MCF 10A (cell line): ENCODE measurements at regions of chr7 and their contacts with region 1.

Region 1: DNA sequence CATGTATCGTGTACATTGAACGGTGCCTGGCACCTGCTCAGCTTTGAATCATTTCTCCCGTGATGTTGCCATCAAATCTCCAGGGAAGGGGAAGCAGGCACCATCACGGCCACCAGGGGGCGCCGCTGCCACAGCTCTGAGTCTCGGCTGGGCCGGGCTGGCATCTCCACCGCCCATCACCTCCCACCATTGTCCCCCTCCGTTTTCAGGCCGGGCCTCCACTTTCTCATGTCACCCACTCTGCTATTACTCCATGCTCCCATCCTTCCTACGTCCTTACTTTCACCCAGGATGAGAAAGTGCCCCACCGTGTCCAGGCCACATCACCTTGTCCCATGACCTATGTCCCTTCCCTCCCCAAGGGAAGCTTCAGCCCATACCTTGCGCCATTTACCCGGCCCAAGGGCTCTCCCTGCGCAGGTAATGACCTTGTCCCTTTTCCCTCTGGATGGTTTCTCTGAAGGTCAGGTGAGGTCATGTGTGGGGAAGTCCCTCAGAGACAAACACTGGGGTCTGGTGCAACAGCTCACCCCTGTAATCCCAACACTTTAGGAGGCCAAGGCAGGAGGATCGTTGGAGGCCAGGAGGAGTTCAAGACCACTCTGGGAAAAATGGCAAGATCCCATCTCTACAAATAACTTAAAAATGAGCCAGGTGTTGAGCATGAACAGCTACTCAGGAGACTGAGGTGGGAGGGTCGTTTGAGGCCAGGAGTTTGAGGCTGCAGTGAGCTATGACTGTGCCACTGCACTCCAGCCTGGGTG is 31.8 kb upstream of the OCM2 start:
- DNase-seq: peak; percentile 79
- H3K4me3 Mint-ChIP-seq: no peak overlapping the region
- H3K27ac Mint-ChIP-seq: no peak overlapping the region
- H3K4me1 Mint-ChIP-seq: no peaks in the 10 kb centered on the region
- H3K27me3 Mint-ChIP-seq: no peaks in the 10 kb centered on the region
- CTCF ChIP-seq: peak; percentile 93

Region 2: DNA sequence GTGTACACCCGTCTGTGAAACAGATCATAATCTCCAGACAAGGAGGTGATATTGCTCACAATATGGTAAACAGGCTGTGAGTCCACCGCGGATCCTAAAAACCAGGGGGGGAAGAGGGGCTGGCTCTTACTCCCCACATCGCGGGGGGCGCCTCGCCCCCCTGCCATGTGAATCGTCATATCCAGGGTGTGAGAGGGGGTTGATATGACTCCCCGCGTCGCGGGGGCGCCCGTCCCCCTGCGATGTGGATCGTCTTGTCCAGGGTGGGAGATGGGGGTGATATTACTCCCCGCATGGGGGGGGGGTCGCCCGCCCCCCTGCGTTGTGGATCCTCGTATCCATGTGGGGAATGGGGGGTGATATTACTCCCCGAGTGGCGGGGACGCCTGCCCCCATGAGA is 62.7 kb before region 1 on chr7:
- CTCF ChIA-PET with region 1: no interaction called
- POLR2A ChIA-PET with region 1: no interaction called
- intact Hi-C with region 1: no loop called
- DNase-seq: no peak
- H3K4me3 Mint-ChIP-seq: no peak overlapping the region
- H3K27ac Mint-ChIP-seq: no peak overlapping the region
- H3K4me1 Mint-ChIP-seq: peaks cover 5% of the 10 kb centered on the region
- H3K27me3 Mint-ChIP-seq: no peaks in the 10 kb centered on the region
- CTCF ChIP-seq: no peak

Region 3: GRCh38 chr7:98034081-98035035 is 12.6 kb after region 1 on chr7:
- CTCF ChIA-PET with region 1: interaction called, 20 read pairs
- POLR2A ChIA-PET with region 1: no interaction called
- intact Hi-C with region 1: no loop called
- DNase-seq: peak; percentile 38
- H3K4me3 Mint-ChIP-seq: no peak overlapping the region
- H3K27ac Mint-ChIP-seq: no peak overlapping the region
- H3K4me1 Mint-ChIP-seq: peaks cover 6% of the 10 kb centered on the region
- H3K27me3 Mint-ChIP-seq: no peaks in the 10 kb centered on the region
- CTCF ChIP-seq: no peak

Region 4: DNA sequence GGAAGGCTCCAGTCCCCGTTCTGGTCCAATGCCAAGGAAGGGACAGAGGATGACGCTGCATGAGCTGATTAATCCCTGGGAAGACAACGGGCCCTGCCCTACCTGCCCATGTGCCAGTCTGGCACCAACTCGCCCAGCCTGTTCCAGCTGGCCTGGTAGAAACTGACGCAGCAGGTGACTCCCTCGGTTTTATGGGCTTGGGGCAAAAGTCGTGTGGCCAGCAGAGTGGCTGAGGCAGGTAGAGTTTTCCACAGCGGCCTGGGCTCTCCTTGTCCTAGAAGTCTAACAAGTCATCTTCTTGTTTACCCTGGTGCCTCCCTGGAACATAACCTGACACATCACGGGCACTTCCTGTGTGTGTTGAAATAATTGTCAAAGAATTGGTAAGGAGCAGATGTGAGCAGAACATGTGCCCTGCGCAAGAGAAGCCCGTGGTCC is 64.5 kb after region 1 on chr7:
- CTCF ChIA-PET with region 1: interaction called, 14 read pairs
- POLR2A ChIA-PET with region 1: interaction called, 4 read pairs
- intact Hi-C with region 1: no loop called
- DNase-seq: peak; percentile 79
- H3K4me3 Mint-ChIP-seq: no peak overlapping the region
- H3K27ac Mint-ChIP-seq: peak overlapping the region; percentile 91
- H3K4me1 Mint-ChIP-seq: peaks cover 8% of the 10 kb centered on the region
- H3K27me3 Mint-ChIP-seq: no peaks in the 10 kb centered on the region
- CTCF ChIP-seq: no peak

Region 5: GRCh38 chr7:98119256-98119918 is 97.6 kb after region 1 on chr7:
- CTCF ChIA-PET with region 1: interaction called, 49 read pairs
- POLR2A ChIA-PET with region 1: no interaction called
- intact Hi-C with region 1: no loop called
- DNase-seq: peak; percentile 59
- H3K4me3 Mint-ChIP-seq: peak overlapping the region; percentile 50
- H3K27ac Mint-ChIP-seq: peak overlapping the region; percentile 87
- H3K4me1 Mint-ChIP-seq: peaks cover 42% of the 10 kb centered on the region
- H3K27me3 Mint-ChIP-seq: no peaks in the 10 kb centered on the region
- CTCF ChIP-seq: no peak

Region 6: GRCh38 chr7:98149116-98149692 is 127.4 kb after region 1 on chr7:
- CTCF ChIA-PET with region 1: interaction called, 12 read pairs
- POLR2A ChIA-PET with region 1: interaction called, 4 read pairs
- intact Hi-C with region 1: no loop called
- DNase-seq: no peak
- H3K4me3 Mint-ChIP-seq: no peak overlapping the region
- H3K27ac Mint-ChIP-seq: no peak overlapping the region
- H3K4me1 Mint-ChIP-seq: no peaks in the 10 kb centered on the region
- H3K27me3 Mint-ChIP-seq: no peaks in the 10 kb centered on the region
- CTCF ChIP-seq: no peak

Region 7: DNA sequence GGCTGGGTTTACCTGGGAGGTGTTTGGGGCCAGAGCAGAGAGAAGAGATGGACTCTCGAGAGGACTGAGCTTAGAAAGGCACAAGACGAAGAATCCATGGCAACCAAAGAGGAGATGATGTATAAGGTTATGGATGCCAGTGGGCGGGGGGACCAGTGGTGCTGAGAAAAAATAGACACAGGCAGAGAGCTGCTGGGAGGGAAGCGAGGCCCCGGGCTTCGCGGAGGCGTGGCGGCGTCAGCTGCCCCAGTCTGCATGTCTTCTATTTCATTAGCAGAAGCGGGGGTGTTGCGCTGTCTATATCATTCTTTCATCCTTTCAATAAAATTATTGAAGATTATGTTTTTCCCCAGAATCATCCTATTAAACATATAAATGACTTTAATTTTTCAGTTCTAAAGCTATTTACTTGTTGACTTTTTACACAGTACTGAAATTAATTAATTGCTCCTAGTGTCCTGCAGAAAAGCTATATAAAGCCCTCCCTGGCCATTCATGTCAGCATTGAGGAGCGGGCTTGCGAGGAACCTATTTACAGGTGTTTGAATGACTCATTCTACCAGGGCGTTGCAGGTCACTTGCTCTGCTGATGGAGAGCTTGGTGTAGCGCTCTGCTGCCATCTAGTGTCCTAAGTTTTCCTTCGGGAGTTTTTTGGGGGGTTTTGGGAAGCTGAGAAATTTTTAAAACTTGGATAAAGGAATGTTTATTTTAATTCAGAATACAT is 146.6 kb after region 1 on chr7:
- CTCF ChIA-PET with region 1: interaction called, 739 read pairs
- POLR2A ChIA-PET with region 1: interaction called, 36 read pairs
- intact Hi-C with region 1: loop called (anchors 1 kb)
- DNase-seq: peak; percentile 82
- H3K4me3 Mint-ChIP-seq: no peak overlapping the region
- H3K27ac Mint-ChIP-seq: no peak overlapping the region
- H3K4me1 Mint-ChIP-seq: peaks cover 9% of the 10 kb centered on the region
- H3K27me3 Mint-ChIP-seq: no peaks in the 10 kb centered on the region
- CTCF ChIP-seq: peak; percentile 86

Region 8: DNA sequence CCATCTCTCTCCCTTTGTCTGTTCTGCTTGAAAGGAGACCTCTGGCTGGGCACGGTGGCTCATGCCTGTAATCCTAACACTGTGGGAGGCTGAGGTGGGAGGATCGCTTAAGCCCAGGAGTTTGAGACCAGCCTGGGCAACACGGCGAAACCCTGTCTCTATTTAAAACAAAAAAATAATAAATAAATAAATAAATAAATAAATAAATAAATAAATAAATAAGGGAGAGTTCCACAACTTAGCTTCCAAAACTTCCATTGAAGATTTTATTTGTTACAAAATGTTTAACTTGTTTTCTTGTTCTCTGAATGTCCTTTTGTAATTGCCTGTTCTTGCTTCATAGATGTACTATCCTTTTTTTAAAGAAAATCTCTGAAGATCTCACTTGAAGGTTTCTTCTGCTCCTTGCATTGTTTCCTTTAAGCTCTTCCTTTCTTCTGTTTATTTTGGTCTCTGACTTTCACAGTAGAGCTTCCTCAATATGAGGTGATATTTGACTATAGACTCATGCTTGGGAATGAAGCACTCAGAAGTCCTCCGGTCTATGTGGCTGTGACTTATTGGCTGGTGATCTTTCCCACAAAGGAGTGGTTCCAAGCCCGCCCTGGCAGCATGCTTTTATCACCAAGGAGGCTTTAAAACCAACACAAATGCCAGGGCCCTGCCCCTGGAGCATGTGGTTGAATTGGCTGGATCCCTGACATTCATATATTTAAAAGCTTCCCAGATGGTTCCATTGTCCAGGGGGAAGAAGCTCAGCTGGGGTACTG is 577.3 kb after region 1 on chr7:
- CTCF ChIA-PET with region 1: no interaction called
- POLR2A ChIA-PET with region 1: no interaction called
- intact Hi-C with region 1: no loop called
- DNase-seq: no peak
- H3K4me3 Mint-ChIP-seq: no peak overlapping the region
- H3K27ac Mint-ChIP-seq: no peak overlapping the region
- H3K4me1 Mint-ChIP-seq: no peaks in the 10 kb centered on the region
- H3K27me3 Mint-ChIP-seq: peaks cover 69% of the 10 kb centered on the region
- CTCF ChIP-seq: no peak

Region 9: GRCh38 chr7:98703916-98704315 is 682.1 kb after region 1 on chr7:
- CTCF ChIA-PET with region 1: no interaction called
- POLR2A ChIA-PET with region 1: no interaction called
- intact Hi-C with region 1: no loop called
- DNase-seq: no peak
- H3K4me3 Mint-ChIP-seq: no peak overlapping the region
- H3K27ac Mint-ChIP-seq: no peak overlapping the region
- H3K4me1 Mint-ChIP-seq: no peaks in the 10 kb centered on the region
- H3K27me3 Mint-ChIP-seq: peaks cover 27% of the 10 kb centered on the region
- CTCF ChIP-seq: no peak

Region 10: GRCh38 chr7:98855610-98856422 is 834.0 kb after region 1 on chr7:
- CTCF ChIA-PET with region 1: no interaction called
- POLR2A ChIA-PET with region 1: no interaction called
- intact Hi-C with region 1: loop called (anchors 5 kb)
- DNase-seq: no peak
- H3K4me3 Mint-ChIP-seq: no peak overlapping the region
- H3K27ac Mint-ChIP-seq: no peak overlapping the region
- H3K4me1 Mint-ChIP-seq: no peaks in the 10 kb centered on the region
- H3K27me3 Mint-ChIP-seq: peaks cover 51% of the 10 kb centered on the region
- CTCF ChIP-seq: no peak